GM12878 (cell line): ENCODE measurements at regions of chr14 and their contacts with region 1.

Region 1: GRCh38 chr14:88492272-88493089 is 62.3 kb downstream of the PTPN21 start:
- DNase-seq: peak; percentile 19
- ATAC-seq: peak; percentile 96
- H3K4me3 ChIP-seq: no peak overlapping the region
- H3K27ac ChIP-seq: no peak overlapping the region
- H3K4me1 ChIP-seq: no peaks in the 10 kb centered on the region
- H3K27me3 ChIP-seq: no peaks in the 10 kb centered on the region; a peak in 1 of 4 replicates
- CTCF ChIP-seq: peak; percentile 72 to 85 (median 75)
- EP300 ChIP-seq: no peak
- POLR2A ChIP-seq: no peak
- RAD21 ChIP-seq: peak; percentile 70

Region 2: GRCh38 chr14:88562831-88563686 is 70.6 kb after region 1 on chr14 and contains the start of gene ZC3H14:
- CTCF ChIA-PET with region 1: interaction called, 16 read pairs
- POLR2A ChIA-PET with region 1: no interaction called
- RAD21 ChIA-PET with region 1: interaction called, 7 read pairs
- SMC1A ChIA-PET with region 1: interaction called, 3 read pairs
- in situ Hi-C with region 1: no loop called
- intact Hi-C with region 1: loop called (anchors 5 kb)
- DNase-seq: peak; percentile 71
- ATAC-seq: peak; percentile 97
- H3K4me3 ChIP-seq: peak within 1 kb of the TSS; percentile 52
- H3K27ac ChIP-seq: peak within 1 kb of the TSS; percentile 52; the same call in 1 of the 2 replicates
- H3K4me1 ChIP-seq: no peaks in the 10 kb centered on the region
- H3K27me3 ChIP-seq: no peaks in the 10 kb centered on the region; a peak in 2 of 4 replicates
- CTCF ChIP-seq: peak; percentile 21 to 40 (median 25); a peak in 4 of 6 replicates
- EP300 ChIP-seq: no peak
- POLR2A ChIP-seq: peak; percentile 92
- RAD21 ChIP-seq: peak; percentile 59
- polyA plus RNA-seq, gene ZC3H14: 17.9 to 19.7 TPM

Region 3: DNA sequence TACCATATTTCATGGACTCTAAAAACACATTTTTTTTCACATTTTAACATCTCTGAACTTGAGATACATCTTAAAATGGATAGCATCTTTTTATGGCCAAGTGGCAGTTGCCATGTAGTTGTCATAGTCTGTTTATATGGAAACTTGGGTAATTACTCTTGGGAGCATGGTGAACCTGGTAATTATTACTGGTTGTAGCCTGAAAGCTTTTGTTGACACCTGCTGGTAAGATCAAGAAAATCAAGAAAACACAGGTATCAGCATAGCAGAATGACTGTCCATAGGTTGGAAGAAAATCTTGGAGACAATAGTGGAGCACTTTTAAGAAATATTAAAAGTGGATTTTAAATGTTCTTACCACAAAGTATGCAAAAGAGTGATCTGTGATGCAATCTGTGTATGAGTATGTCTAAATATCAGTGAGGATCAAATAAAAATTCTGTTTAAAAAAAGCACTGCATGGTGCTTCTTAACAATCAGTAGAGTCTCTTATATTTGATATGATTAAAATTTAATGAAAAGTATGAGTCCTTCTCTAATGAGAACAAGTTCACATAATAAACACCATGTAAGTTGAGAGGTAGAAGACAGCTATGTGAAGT is 376.2 kb after region 1 on chr14:
- CTCF ChIA-PET with region 1: interaction called, 13 read pairs
- POLR2A ChIA-PET with region 1: no interaction called
- RAD21 ChIA-PET with region 1: no interaction called
- SMC1A ChIA-PET with region 1: no interaction called
- in situ Hi-C with region 1: no loop called
- intact Hi-C with region 1: loop called (anchors 2 kb)
- DNase-seq: no peak
- ATAC-seq: peak; percentile 74
- H3K4me3 ChIP-seq: no peak overlapping the region
- H3K27ac ChIP-seq: no peak overlapping the region
- H3K4me1 ChIP-seq: no peaks in the 10 kb centered on the region
- H3K27me3 ChIP-seq: no peaks in the 10 kb centered on the region
- CTCF ChIP-seq: peak; percentile 27 to 47 (median 35); a peak in 4 of 6 replicates
- EP300 ChIP-seq: no peak
- POLR2A ChIP-seq: no peak
- RAD21 ChIP-seq: peak; percentile 75